Posterior vena cava (tissue), 2 donors: ENCODE measurements at regions of chr14 and their contacts with region 1.

Region 1: DNA sequence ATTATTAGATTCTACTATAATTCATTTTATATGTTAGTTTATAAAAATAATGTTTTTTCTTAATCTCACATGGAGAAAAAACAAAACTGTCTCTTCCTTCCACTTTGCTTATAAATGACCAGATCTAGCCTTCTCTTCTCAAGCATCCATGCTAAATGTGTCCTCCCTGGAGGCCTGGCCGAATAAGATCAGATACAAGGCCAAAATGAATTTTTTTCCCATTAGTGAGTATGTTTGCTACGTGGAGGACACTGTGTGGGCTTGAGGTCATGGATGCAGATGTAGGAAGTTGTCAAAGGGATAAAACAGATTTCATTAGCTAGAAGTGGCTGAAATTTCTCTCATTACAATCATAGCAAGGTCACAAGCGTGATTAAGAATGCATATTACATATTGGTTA is 1244.9 kb upstream of the SEL1L start:
- DNase-seq: no peak

Region 2: GRCh38 chr14:81571437-81571836 is 1207.2 kb before region 1 on chr14:
- intact Hi-C with region 1: loop called in 1 of 2 experiments (anchors 5 kb)
- DNase-seq: no peak